OCI-LY7 (cell line): ENCODE measurements at regions of chr16 and their contacts with region 1.

Region 1: GRCh38 chr16:24689145-24689544 is 40.3 kb upstream of the TNRC6A start:
- DNase-seq: peak; percentile 20
- H3K4me3 ChIP-seq: no peak overlapping the region
- H3K27ac ChIP-seq: no peak overlapping the region
- H3K4me1 ChIP-seq: no peaks in the 10 kb centered on the region
- CTCF ChIP-seq: peak; percentile 70

Region 2: DNA sequence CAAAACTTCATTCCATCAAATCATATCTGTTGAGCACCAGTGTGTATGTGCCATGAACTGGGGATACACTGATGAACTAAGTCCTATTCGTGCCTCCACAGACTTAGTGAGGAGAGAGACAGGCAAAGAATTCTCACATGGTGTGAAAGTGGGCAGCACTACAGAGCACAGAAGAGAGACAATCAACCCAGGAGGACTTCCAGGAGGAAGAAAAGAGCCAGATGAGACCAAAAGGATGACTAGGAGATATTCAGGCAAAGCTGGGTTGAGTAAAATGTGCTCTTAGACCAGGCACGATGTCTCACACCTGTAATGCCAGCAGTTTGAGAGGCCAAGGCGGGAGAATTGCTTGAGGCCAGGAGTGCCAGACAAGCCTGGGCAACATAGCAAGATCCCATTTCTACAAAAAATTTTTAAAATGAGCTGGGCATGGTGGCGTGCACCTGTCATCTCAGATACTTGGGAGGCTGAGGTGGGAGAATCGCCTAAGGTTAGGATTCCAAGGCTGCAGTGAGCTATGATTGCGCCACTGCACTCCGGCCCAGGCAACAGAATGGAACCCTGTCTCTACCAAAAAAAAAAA is 10.1 kb after region 1 on chr16:
- CTCF ChIA-PET with region 1: no interaction called
- POLR2A ChIA-PET with region 1: interaction called, 10 read pairs
- intact Hi-C with region 1: no loop called
- DNase-seq: no peak
- H3K4me3 ChIP-seq: no peak overlapping the region
- H3K27ac ChIP-seq: no peak overlapping the region
- H3K4me1 ChIP-seq: no peaks in the 10 kb centered on the region
- CTCF ChIP-seq: no peak

Region 3: GRCh38 chr16:24921229-24921628 is 232.1 kb after region 1 on chr16:
- CTCF ChIA-PET with region 1: no interaction called
- POLR2A ChIA-PET with region 1: interaction called, 12 read pairs
- intact Hi-C with region 1: no loop called
- DNase-seq: no peak
- H3K4me3 ChIP-seq: no peak overlapping the region
- H3K27ac ChIP-seq: no peak overlapping the region
- H3K4me1 ChIP-seq: no peaks in the 10 kb centered on the region
- CTCF ChIP-seq: no peak